Caco-2 (cell line): ENCODE measurements at regions of chr1 and their contacts with region 1.

Region 1: DNA sequence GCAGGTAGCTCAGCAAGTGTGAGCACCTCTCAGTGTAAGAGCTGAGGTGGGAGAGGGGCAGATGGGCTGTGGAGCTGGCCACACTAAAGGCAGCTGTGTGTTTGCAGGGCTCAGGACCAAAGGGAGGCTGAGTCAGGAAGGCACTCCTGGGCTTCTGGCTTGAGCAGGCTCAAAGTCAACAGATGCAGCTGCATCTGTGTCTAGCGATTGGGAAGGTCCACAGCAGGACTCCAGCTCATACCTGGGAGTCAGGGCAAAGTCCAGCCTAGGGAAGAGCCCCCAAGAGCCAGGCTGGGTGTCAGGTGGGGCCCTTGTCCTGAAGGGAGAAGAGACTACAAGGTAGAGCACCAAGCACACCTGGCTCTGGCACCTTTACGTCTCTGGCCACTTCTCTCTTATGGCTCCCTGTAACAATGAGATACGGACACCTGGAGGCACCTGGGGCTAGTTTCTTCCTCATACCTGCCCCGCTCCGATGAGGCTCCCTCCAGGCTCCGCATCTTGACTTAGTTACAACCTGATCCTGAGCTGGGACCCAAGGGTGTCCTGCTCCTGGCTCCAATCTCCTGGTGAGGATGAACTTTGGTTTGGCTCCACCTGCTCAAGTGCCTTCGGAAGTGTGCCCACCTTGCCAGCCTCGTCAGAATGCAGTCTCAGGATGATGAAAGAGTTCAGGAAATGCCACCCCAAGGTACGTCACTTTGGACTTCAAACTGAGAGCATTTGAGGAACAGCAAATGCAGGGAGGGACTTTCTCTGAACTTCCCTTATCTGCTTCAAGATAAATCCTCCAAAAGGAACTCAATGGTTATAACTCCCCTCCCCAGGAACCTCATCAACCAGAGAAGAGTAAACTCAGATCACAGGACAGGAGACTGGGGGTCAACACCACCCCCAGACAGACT is 21.5 kb upstream of the SLC2A1 start:
- DNase-seq: peak; percentile 77 to 87
- H3K4me3 ChIP-seq: peak overlapping the region; percentile 17
- H3K4me3 Mint-ChIP-seq: peak overlapping the region; percentile 78
- H3K27ac Mint-ChIP-seq: peak overlapping the region; percentile 98
- H3K4me1 ChIP-seq: peaks cover 55% of the 10 kb centered on the region
- H3K4me1 Mint-ChIP-seq: peaks cover 48% of the 10 kb centered on the region
- H3K27me3 ChIP-seq: no peaks in the 10 kb centered on the region
- H3K27me3 Mint-ChIP-seq: no peaks in the 10 kb centered on the region
- CTCF ChIP-seq: no peak

Region 2: DNA sequence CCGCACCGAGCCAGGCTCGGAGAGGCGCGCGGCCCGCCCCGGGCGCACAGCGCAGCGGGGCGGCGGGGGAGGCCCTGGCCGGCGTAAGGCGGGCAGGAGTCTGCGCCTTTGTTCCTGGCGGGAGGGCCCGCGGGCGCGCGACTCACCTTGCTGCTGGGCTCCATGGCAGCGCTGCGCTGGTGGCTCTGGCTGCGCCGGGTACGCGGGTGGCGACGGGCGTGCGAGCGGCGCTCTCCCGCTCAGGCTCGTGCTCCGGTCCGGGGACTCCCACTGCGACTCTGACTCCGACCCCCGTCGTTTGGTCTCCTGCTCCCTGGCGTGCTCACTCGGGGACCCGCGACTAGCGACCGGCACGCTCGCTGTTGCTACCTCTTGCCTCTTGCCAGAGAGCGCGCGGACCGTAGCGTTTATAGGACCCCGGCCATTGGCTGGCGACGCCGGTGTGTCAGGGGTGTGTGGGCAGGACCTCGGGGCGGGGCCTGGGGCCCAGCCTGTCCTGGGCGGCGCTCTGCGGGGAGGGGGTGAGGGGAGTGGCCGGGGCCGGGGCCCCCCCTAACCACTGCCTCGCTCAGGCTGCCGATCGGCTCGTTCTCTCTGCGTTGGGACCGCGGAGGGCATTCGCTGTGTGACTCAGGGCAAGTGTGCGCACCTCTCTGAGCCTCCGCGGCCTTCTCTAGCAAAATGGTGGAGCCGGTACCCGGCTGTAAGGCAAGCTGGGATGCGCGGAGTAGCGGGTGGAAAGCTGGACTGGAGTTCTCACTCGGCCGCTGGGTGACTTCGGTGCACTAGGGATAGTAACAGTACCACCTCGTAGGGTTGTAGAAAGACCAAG is 21.4 kb before region 1 on chr1 and contains the start of gene SLC2A1:
- CTCF ChIA-PET with region 1: interaction called, 4 read pairs
- POLR2A ChIA-PET with region 1: interaction called, 6 read pairs
- intact Hi-C with region 1: loop called (anchors 1 kb)
- DNase-seq: peak; percentile 94 to 96
- H3K4me3 ChIP-seq: peak within 1 kb of the TSS; percentile 95
- H3K4me3 Mint-ChIP-seq: peak within 1 kb of the TSS; percentile 93
- H3K27ac Mint-ChIP-seq: peak within 1 kb of the TSS; percentile 93
- H3K4me1 ChIP-seq: peaks cover 54% of the 10 kb centered on the region
- H3K4me1 Mint-ChIP-seq: peaks cover 41% of the 10 kb centered on the region
- H3K27me3 ChIP-seq: no peaks in the 10 kb centered on the region
- H3K27me3 Mint-ChIP-seq: no peaks in the 10 kb centered on the region
- CTCF ChIP-seq: no peak
- total RNA-seq, gene SLC2A1: 422 and 437 TPM in 2 replicates

Region 3: DNA sequence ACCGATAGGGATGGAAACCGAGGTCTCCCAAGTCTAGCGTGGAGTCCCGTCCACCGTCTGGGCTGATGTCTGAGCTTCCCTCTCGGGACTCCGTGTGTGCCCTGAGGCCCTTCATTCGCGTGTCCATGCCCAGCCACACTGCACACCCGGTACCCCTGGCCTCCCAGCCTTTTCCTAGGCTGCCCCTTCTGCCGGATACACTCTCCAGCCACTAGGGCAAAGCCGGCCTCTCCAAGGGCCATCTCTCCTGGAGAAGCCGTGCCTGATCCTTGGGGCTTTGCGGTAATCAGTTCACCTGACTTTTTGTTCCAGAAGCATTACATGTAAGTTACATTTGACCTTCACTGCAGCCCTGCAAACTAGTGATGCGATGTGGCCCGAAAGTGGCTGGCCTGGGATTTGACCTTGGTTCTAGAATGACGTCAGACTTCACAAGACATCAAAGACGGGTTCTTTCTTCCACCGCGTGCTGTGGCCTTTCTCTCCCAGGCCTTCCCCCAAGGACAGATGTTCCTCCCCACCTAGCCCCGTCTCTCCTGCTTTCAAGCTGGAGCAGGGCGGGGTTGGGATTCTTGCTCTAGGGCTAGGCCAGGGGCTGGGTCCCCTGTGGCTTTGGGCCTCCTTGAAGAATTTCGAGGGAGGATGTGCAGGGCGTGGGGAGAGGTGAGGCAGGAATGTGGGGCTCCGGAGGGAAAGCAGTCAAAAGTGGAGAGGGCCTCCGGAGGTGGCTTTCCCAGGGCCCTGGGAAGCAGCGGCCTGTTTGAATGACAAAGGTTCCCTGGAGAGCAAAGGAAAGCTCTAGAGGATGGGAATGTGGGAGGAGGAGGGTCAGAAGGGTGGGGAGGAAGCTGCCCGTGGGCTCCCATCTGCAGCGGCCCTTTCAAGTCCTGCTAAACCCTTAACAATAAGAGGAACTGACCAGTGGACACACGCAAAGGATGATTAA is 28.2 kb after region 1 on chr1:
- CTCF ChIA-PET with region 1: interaction called, 7 read pairs
- POLR2A ChIA-PET with region 1: interaction called, 5 read pairs
- intact Hi-C with region 1: loop called (anchors 1 kb)
- DNase-seq: peak; percentile 96 to 99
- H3K4me3 ChIP-seq: peak overlapping the region; percentile 19
- H3K4me3 Mint-ChIP-seq: peak overlapping the region; percentile 71
- H3K27ac Mint-ChIP-seq: peak overlapping the region; percentile 99
- H3K4me1 ChIP-seq: peaks cover 86% of the 10 kb centered on the region
- H3K4me1 Mint-ChIP-seq: peaks cover 33% of the 10 kb centered on the region
- H3K27me3 ChIP-seq: no peaks in the 10 kb centered on the region
- H3K27me3 Mint-ChIP-seq: no peaks in the 10 kb centered on the region
- CTCF ChIP-seq: peak in 1 of 2 experiments; percentile 29

Region 4: DNA sequence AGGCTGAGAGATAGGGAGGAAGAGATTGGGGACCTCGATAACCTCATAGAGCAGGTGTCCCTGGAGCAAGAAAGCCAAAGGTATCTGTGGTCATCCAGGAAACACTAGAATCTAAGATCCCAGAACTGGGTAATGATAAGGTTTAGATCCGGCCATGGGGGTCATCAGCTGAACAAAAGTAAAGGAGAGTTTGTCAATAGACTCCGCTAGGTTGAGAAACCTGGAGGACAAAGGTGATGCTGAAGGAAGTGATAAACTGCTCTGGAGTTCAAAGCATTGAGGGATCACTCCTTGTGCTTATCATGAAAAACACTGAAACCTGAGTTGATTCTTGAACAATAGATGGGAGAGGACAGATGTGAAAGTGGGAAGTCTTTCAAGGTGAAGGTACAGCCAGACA is 38.0 kb after region 1 on chr1:
- CTCF ChIA-PET with region 1: interaction called, 6 read pairs
- POLR2A ChIA-PET with region 1: no interaction called
- intact Hi-C with region 1: loop called (anchors 1 kb)
- DNase-seq: peak; percentile 78 to 82
- H3K4me3 ChIP-seq: no peak overlapping the region
- H3K4me3 Mint-ChIP-seq: peak overlapping the region; percentile 7
- H3K27ac Mint-ChIP-seq: peak overlapping the region; percentile 63
- H3K4me1 ChIP-seq: peaks cover 39% of the 10 kb centered on the region
- H3K4me1 Mint-ChIP-seq: peaks cover 29% of the 10 kb centered on the region
- H3K27me3 ChIP-seq: no peaks in the 10 kb centered on the region
- H3K27me3 Mint-ChIP-seq: no peaks in the 10 kb centered on the region
- CTCF ChIP-seq: no peak

Region 5: GRCh38 chr1:43039228-43040055 is 59.3 kb after region 1 on chr1:
- CTCF ChIA-PET with region 1: no interaction called
- POLR2A ChIA-PET with region 1: no interaction called
- intact Hi-C with region 1: loop called (anchors 2 kb)
- DNase-seq: peak; percentile 70 to 85
- H3K4me3 ChIP-seq: no peak overlapping the region
- H3K4me3 Mint-ChIP-seq: no peak overlapping the region
- H3K27ac Mint-ChIP-seq: peak overlapping the region; percentile 81
- H3K4me1 ChIP-seq: peaks cover 73% of the 10 kb centered on the region
- H3K4me1 Mint-ChIP-seq: peaks cover 33% of the 10 kb centered on the region
- H3K27me3 ChIP-seq: no peaks in the 10 kb centered on the region
- H3K27me3 Mint-ChIP-seq: no peaks in the 10 kb centered on the region
- CTCF ChIP-seq: no peak

Region 6: DNA sequence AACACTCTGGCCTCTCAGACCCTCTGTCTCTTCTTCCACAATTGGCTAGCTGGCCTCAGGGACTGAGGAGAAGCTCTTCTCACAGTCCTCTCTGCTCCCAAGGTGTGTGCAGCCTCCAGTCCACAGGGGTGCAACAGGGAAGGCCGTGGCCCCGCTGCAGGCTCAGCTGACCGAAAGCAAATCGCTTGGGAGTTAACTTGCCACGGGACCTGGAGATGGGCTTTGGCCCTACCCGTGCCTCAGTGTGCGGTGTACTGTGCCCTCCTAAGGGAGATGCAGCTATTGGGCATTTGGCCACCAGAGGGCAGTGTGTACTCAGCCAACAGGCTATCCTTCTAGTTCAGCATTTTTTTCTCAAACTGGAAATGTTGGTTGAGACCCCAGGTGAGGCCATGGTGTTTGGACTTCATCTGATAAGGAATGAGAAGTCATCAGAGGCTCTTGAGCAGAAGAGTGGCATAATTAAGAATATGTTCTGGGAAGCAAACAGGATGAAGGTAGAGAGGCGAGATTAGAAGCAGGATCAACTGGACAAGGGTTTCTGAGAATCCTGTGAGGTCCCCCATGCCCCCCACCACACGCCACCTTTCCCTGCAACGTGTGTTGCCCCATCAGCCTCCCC is 247.1 kb after region 1 on chr1:
- CTCF ChIA-PET with region 1: no interaction called
- POLR2A ChIA-PET with region 1: no interaction called
- intact Hi-C with region 1: no loop called
- DNase-seq: peak; percentile 84 to 87
- H3K4me3 ChIP-seq: no peak overlapping the region
- H3K4me3 Mint-ChIP-seq: no peak overlapping the region
- H3K27ac Mint-ChIP-seq: peak overlapping the region; percentile 57
- H3K4me1 ChIP-seq: peaks cover 11% of the 10 kb centered on the region
- H3K4me1 Mint-ChIP-seq: peaks cover 23% of the 10 kb centered on the region
- H3K27me3 ChIP-seq: no peaks in the 10 kb centered on the region
- H3K27me3 Mint-ChIP-seq: no peaks in the 10 kb centered on the region
- CTCF ChIP-seq: peak; percentile 78 to 84

Region 7: DNA sequence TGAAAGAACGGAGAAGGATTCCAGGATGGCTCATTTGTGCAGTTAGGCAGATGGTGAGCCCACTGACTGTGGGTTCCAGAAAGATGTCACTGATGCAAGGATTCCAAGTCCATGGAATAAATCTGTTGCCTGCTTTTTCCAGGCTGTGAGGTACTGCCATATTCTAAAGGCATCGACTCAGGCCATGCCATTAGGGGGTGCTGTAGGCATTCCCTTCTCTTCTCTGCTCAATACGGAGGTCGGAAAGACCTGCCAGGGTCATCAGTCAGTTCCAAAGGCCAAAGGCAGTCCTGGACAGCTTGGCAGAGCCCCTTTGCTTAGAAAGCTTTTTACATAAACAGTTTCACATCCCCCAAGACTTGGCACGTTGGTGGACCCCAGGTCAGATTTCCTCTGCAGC is 257.9 kb after region 1 on chr1:
- CTCF ChIA-PET with region 1: no interaction called
- POLR2A ChIA-PET with region 1: no interaction called
- intact Hi-C with region 1: no loop called
- DNase-seq: peak; percentile 72 to 73
- H3K4me3 ChIP-seq: no peak overlapping the region
- H3K4me3 Mint-ChIP-seq: no peak overlapping the region
- H3K27ac Mint-ChIP-seq: no peak overlapping the region
- H3K4me1 ChIP-seq: no peaks in the 10 kb centered on the region
- H3K4me1 Mint-ChIP-seq: no peaks in the 10 kb centered on the region
- H3K27me3 ChIP-seq: no peaks in the 10 kb centered on the region
- H3K27me3 Mint-ChIP-seq: no peaks in the 10 kb centered on the region
- CTCF ChIP-seq: peak; percentile 39 to 69